ENCODE measurements at regions of chr2 and their contacts with region 1.

Region 1: GRCh38 chr2:207746131-207746530 is 23.6 kb downstream of the FZD5 start:
- DNase-seq: peak; percentile 26
- H3K4me3 ChIP-seq: no peak overlapping the region
- CTCF ChIP-seq: peak; percentile 87

Region 2: DNA sequence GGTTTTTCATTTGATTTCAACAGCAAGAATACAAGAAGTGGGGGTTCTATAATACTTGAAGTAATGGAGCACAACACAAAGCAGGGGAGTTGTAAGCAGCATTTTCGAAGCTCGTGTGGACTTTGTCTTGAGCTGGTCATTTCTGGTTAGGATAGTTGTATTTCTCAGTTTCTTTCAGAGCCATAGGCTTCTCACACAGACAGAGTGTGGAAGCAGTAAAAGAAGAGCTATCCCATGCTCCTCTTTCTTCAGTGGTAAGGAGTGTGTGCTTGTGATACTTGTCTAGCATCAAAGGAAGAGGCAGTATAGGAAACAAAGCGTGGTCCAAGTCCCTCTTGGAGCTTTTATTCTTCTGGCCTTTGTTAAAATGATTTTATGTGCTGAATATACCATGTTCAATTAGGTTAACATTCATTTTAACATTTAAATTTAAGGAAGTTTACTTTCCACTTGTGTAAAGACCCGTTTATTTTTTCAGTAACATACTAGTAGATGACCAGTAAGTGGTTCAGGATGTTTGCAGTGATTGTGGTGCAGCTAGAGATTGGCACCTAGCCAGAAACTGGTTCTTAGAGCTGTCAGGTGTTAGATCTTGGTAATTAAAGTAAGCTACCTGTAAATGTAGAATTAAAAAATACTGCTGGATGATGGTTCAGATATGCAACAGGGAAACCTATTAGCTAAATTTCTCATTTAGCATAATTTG is 20.1 kb before region 1 on chr2:
- CTCF ChIA-PET with region 1: interaction called, 12 read pairs
- POLR2A ChIA-PET with region 1: no interaction called
- DNase-seq: no peak
- H3K4me3 ChIP-seq: no peak overlapping the region
- CTCF ChIP-seq: no peak

Region 3: DNA sequence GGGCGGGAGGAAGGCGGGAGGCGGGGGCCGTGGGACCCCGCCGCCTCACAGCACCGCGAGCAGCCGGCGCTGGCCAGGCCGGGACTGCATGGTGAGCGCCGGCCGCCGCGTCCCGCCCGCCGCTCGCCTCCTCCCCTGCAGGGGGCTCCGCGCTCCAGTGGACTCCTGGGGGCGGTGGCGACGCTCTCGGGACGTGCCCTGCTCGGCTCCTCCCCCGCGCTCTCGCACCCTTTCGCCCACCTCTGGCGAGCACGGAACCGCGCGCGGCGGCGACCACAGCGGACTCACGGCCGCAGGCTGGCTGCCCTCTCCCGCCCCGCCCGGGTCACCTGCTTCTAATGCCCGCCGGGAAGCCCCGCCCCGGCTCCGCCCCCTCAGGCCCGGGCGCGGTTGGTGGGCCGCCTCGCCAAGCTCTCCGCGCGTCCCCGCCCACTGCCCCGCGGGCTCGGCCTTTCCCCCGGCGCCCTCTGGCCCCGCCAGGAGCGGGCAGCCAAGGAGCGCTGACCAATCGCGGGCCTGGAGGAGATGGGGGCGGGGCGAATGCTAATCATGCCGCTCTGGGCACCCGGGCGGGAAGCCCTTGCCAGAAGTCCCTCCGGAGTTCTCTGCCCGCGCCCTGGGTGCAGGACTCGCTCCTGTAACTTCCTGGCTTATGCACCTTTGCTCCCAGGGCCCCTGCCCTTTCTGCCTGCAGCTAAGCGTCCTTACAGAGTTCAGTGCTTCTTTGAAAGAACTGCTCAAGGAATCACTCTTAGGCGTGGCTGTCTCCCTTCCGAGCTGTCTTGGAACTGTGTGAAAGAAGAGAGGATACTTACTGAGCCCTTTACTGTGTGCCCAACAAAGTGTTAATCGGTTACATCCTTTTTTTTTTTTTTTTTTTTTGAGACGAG is 23.7 kb after region 1 on chr2 and contains the start of gene FZD5:
- CTCF ChIA-PET with region 1: interaction called, 79 read pairs
- POLR2A ChIA-PET with region 1: no interaction called
- DNase-seq: no peak
- H3K4me3 ChIP-seq: peak within 1 kb of the TSS; percentile 69
- CTCF ChIP-seq: peak; percentile 75

Region 4: GRCh38 chr2:208064220-208064961 is 318.3 kb after region 1 on chr2:
- CTCF ChIA-PET with region 1: interaction called, 332 read pairs
- POLR2A ChIA-PET with region 1: interaction called, 4 read pairs
- DNase-seq: peak; percentile 78
- H3K4me3 ChIP-seq: no peak overlapping the region
- CTCF ChIP-seq: no peak

Region 5: DNA sequence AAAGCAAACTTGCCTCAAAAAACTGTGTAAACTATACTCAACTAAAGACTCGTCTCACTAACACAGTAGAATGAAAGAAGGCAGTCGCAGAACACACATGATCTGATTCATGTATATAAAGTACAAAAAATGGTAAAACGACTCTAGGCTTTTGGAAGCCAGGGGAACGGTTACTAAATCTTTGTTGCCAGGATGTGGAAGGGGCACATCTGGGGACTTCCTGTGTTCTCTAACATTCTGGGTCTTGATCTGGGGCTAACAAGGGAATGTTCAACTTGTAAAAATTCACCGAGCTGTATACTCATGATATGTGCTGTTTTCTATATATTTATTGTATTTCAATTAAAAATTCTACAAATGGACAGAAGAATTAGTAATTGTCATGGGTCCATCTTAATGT is 458.0 kb after region 1 on chr2:
- CTCF ChIA-PET with region 1: no interaction called
- POLR2A ChIA-PET with region 1: no interaction called
- DNase-seq: no peak
- H3K4me3 ChIP-seq: no peak overlapping the region
- CTCF ChIP-seq: no peak

Region 6: DNA sequence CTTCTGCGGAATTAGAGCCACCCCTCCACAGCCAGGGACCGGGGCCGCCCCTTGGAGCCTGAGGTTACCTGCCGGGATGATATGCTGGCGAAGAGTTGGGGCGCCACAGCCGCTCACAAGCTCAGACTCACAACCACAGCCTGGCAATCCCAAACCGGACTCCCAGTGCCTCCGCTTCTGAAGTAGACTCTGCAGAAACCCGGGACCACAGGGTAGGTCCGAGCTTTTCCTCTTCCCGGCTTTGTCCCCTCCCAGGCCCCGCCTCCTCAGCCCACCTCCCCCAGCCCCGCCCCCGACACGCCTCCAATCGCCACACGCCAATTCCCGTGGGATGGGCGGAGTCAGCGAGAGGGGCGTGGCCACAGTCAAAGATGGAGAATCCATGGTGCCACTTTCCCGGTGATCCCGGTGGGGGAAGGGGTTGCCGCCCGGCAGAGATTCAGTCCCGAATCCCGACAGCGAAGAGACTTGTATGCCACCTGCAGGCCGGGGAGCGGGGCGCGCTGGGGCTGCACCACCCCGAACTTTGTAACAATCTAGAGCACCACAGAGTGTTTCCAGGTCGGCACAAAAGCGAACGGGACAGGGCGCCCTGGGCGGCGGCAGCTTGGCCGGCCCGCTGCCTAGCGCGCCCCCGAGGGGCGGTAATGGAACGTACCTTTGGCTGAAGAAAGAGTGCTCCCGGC is 508.9 kb after region 1 on chr2 and contains the start of gene IDH1:
- CTCF ChIA-PET with region 1: interaction called, 17 read pairs
- POLR2A ChIA-PET with region 1: no interaction called
- DNase-seq: peak; percentile 37
- H3K4me3 ChIP-seq: peak within 1 kb of the TSS; percentile 89
- CTCF ChIP-seq: peak; percentile 56